ENCODE measurements at regions of chr17 and their contacts with region 1.

Region 1: GRCh38 chr17:78745407-78746088 is 36.5 kb downstream of the CYTH1 start:
- DNase-seq: peak in 7 of 9 donors; percentile 48 to 67 (median 56)
- ATAC-seq: peak; percentile 13
- H3K4me3 ChIP-seq: peak overlapping the region; percentile 6
- H3K4me3 Mint-ChIP-seq: peak overlapping the region; percentile 53 to 93 (median 86)
- H3K27ac ChIP-seq: peak overlapping the region; percentile 81
- H3K27ac Mint-ChIP-seq: peak overlapping the region; percentile 62 to 98 (median 95)
- H3K4me1 ChIP-seq: peaks cover 92 to 94% of the 10 kb centered on the region in 2 donors
- H3K4me1 Mint-ChIP-seq: peaks cover 77 to 100% (median 93%) of the 10 kb centered on the region in 7 donors
- H3K27me3 ChIP-seq: no peaks in the 10 kb centered on the region
- H3K27me3 Mint-ChIP-seq: no peaks in the 10 kb centered on the region

Region 2: DNA sequence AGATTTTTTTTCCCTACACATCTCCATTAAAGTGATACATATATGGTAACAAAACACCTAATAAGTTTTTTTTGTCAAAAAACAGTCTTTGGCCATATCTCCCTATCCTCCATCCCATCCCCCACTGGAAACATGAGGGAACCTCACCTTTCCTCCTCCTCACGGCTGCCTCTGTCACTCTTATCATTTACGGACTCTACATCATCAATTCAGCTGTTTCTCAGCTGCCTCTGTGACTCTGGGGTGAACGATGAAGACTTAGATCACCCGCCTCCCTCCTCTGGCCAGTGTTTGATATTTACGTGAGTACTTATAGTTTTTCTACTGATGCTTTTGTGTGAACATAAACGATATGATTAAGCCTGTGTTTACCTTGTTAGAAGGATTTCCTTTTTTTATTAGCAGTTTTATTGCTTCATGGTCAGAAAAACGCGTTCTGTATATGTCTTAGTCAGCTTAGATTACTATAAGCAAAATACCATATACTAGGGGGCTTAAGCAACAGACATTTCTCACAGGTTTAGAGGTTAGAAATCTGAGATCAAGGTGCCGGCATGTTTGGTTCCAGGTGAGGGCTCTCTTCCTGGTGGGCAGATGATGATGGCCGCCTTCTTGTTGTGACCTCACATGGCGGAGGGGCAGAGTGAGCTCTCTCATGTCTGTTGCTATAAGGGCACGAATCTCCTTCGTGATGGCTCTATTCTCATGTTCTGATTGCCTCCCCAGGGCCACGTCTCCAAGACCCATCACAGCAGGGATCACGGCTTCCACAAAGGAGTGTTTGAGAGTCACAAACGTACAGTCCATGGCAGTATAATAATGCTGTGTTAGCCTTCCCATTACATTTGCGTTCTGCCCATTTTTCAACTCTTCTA is 200.4 kb before region 1 on chr17:
- CTCF ChIA-PET with region 1: no interaction called
- POLR2A ChIA-PET with region 1: no interaction called
- intact Hi-C with region 1: no loop called
- DNase-seq: no peak
- ATAC-seq: no peak
- H3K4me3 ChIP-seq: no peak overlapping the region
- H3K4me3 Mint-ChIP-seq: no peak overlapping the region
- H3K27ac ChIP-seq: no peak overlapping the region
- H3K27ac Mint-ChIP-seq: no peak overlapping the region
- H3K4me1 ChIP-seq: no peaks in the 10 kb centered on the region
- H3K4me1 Mint-ChIP-seq: peaks cover 0 to 7% (median 0%) of the 10 kb centered on the region in 7 donors
- H3K27me3 ChIP-seq: no peaks in the 10 kb centered on the region
- H3K27me3 Mint-ChIP-seq: peaks cover 0 to 7% (median 0%) of the 10 kb centered on the region in 5 donors

Region 3: GRCh38 chr17:78568494-78569115 is 176.9 kb before region 1 on chr17:
- CTCF ChIA-PET with region 1: no interaction called
- POLR2A ChIA-PET with region 1: no interaction called
- intact Hi-C with region 1: no loop called
- DNase-seq: no peak
- ATAC-seq: no peak
- H3K4me3 ChIP-seq: no peak overlapping the region
- H3K4me3 Mint-ChIP-seq: no peak overlapping the region
- H3K27ac ChIP-seq: no peak overlapping the region
- H3K27ac Mint-ChIP-seq: no peak overlapping the region
- H3K4me1 ChIP-seq: no peaks in the 10 kb centered on the region
- H3K4me1 Mint-ChIP-seq: no peaks in the 10 kb centered on the region
- H3K27me3 ChIP-seq: no peaks in the 10 kb centered on the region
- H3K27me3 Mint-ChIP-seq: peaks cover 0 to 10% (median 0%) of the 10 kb centered on the region in 5 donors

Region 4: GRCh38 chr17:78723001-78723796 is 22.3 kb before region 1 on chr17:
- CTCF ChIA-PET with region 1: interaction called, 5 read pairs
- POLR2A ChIA-PET with region 1: interaction called, 26 read pairs
- intact Hi-C with region 1: loop called in 1 of 2 experiments (anchors 2 kb)
- DNase-seq: no peak
- ATAC-seq: no peak
- H3K4me3 ChIP-seq: no peak overlapping the region
- H3K4me3 Mint-ChIP-seq: peak overlapping the region; percentile 33 to 88 (median 78)
- H3K27ac ChIP-seq: peak overlapping the region; percentile 50
- H3K27ac Mint-ChIP-seq: peak overlapping the region; percentile 50 to 96 (median 90)
- H3K4me1 ChIP-seq: peaks cover 95 to 97% of the 10 kb centered on the region in 2 donors
- H3K4me1 Mint-ChIP-seq: peaks cover 88 to 99% (median 94%) of the 10 kb centered on the region in 7 donors
- H3K27me3 ChIP-seq: no peaks in the 10 kb centered on the region
- H3K27me3 Mint-ChIP-seq: no peaks in the 10 kb centered on the region

Region 5: GRCh38 chr17:78769196-78769773 is 23.7 kb after region 1 on chr17:
- CTCF ChIA-PET with region 1: interaction called, 5 read pairs
- POLR2A ChIA-PET with region 1: interaction called, 122 read pairs
- intact Hi-C with region 1: loop called (anchors 1 to 2 kb)
- DNase-seq: no peak
- ATAC-seq: peak; percentile 47
- H3K4me3 ChIP-seq: no peak overlapping the region
- H3K4me3 Mint-ChIP-seq: no peak overlapping the region
- H3K27ac ChIP-seq: peak overlapping the region; percentile 73
- H3K27ac Mint-ChIP-seq: no peak overlapping the region
- H3K4me1 ChIP-seq: peaks cover 90 to 93% of the 10 kb centered on the region in 2 donors
- H3K4me1 Mint-ChIP-seq: peaks cover 21 to 45% (median 40%) of the 10 kb centered on the region in 7 donors
- H3K27me3 ChIP-seq: no peaks in the 10 kb centered on the region
- H3K27me3 Mint-ChIP-seq: no peaks in the 10 kb centered on the region

Region 6: GRCh38 chr17:78789663-78790181 is 44.2 kb after region 1 on chr17:
- CTCF ChIA-PET with region 1: interaction called, 5 read pairs
- POLR2A ChIA-PET with region 1: interaction called, 17 read pairs
- intact Hi-C with region 1: no loop called
- DNase-seq: peak in 8 of 9 donors; percentile 45 to 90 (median 86)
- ATAC-seq: peak; percentile 80
- H3K4me3 ChIP-seq: no peak overlapping the region
- H3K4me3 Mint-ChIP-seq: peak overlapping the region; percentile 36 to 82 (median 74)
- H3K27ac ChIP-seq: peak overlapping the region; percentile 72
- H3K27ac Mint-ChIP-seq: peak overlapping the region; percentile 69 to 98 (median 96)
- H3K4me1 ChIP-seq: peaks cover 37 to 65% of the 10 kb centered on the region in 2 donors
- H3K4me1 Mint-ChIP-seq: peaks cover 40 to 91% (median 71%) of the 10 kb centered on the region in 7 donors
- H3K27me3 ChIP-seq: no peaks in the 10 kb centered on the region
- H3K27me3 Mint-ChIP-seq: no peaks in the 10 kb centered on the region

Region 7: GRCh38 chr17:78818932-78819331 is 73.4 kb after region 1 on chr17:
- CTCF ChIA-PET with region 1: interaction called, 3 read pairs
- POLR2A ChIA-PET with region 1: interaction called, 8 read pairs
- intact Hi-C with region 1: loop called (anchors 1 kb)
- DNase-seq: peak in 7 of 9 donors; percentile 76 to 89 (median 86)
- ATAC-seq: peak; percentile 72
- H3K4me3 ChIP-seq: peak overlapping the region; percentile 37
- H3K4me3 Mint-ChIP-seq: peak overlapping the region; percentile 68 to 85 (median 78)
- H3K27ac ChIP-seq: peak overlapping the region; percentile 88
- H3K27ac Mint-ChIP-seq: peak overlapping the region; percentile 94 to 99 (median 96)
- H3K4me1 ChIP-seq: peaks cover 42 to 47% of the 10 kb centered on the region in 2 donors
- H3K4me1 Mint-ChIP-seq: peaks cover 36 to 76% (median 56%) of the 10 kb centered on the region in 7 donors
- H3K27me3 ChIP-seq: no peaks in the 10 kb centered on the region
- H3K27me3 Mint-ChIP-seq: no peaks in the 10 kb centered on the region

Region 8: DNA sequence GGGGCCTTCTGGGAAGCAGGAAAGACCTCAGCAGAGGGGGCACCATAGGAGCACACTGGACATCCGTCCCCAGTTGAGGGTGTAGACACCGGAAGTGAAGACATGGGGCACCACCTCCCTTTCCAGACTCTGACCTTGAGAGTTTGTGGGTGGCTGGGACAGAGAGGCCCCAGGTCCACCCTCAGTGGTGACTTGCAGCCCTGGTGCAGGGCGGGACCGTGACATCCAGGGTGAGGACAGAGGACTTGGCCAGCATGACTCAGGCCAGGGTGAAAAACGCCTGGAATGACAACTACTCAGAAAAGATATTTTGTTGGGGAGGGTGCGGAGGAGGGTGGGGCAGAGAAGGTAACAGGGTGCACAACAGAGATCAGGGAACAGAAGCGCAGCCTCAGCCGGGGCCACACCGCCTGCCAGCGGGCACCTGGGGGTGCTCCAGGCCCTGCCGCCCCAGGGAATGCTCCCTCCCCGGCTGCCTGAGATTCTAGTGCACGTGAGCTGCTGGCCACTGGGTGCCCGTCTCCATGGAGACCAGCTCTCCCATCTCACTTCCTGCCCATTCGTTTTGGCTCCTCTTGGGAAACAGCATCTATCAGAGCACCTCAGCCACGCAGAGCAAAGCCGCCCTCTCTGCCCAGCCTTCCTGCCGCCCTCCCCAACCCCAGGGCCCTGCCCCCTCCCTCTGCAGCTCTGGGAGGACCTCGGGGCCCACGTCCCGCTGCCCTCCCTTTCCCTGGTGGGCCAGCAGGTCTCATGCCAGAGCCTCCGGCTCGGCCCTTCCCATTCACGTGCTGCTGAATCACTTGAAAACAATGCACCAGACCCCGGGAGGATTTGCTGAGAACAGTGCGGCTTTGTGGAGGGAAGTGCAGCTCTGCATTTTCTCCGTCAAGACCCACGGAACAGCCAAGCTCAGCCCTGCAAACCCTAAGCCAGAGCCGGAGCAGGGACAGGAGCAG is 137.9 kb after region 1 on chr17:
- CTCF ChIA-PET with region 1: no interaction called
- POLR2A ChIA-PET with region 1: no interaction called
- intact Hi-C with region 1: no loop called
- DNase-seq: peak in 2 of 9 donors; percentile 10
- ATAC-seq: peak; percentile 87
- H3K4me3 ChIP-seq: no peak overlapping the region
- H3K4me3 Mint-ChIP-seq: peak overlapping the region in 7 of 10 donors; percentile 5 to 57 (median 38)
- H3K27ac ChIP-seq: no peak overlapping the region
- H3K27ac Mint-ChIP-seq: peak overlapping the region in 8 of 9 donors; percentile 30 to 77 (median 55)
- H3K4me1 ChIP-seq: peaks cover 0 to 19% of the 10 kb centered on the region in 2 donors
- H3K4me1 Mint-ChIP-seq: peaks cover 16 to 35% (median 29%) of the 10 kb centered on the region in 7 donors
- H3K27me3 ChIP-seq: no peaks in the 10 kb centered on the region
- H3K27me3 Mint-ChIP-seq: peaks cover 0 to 11% (median 0%) of the 10 kb centered on the region in 5 donors

Measured in naive thymus-derived CD4-positive, alpha-beta T cell (primary cell).